Left colon (tissue), 2 donors: ENCODE measurements at regions of chr21 and their contacts with region 1.

Region 1: GRCh38 chr21:20999659-21000058 is 1.4 kb downstream of the NCAM2 start:
- DNase-seq: peak in 1 of 2 donors; percentile 32
- ATAC-seq: peak; percentile 57

Region 2: GRCh38 chr21:21188513-21189195 is 189.0 kb after region 1 on chr21:
- intact Hi-C with region 1: no loop called
- DNase-seq: no peak
- ATAC-seq: no peak

Region 3: DNA sequence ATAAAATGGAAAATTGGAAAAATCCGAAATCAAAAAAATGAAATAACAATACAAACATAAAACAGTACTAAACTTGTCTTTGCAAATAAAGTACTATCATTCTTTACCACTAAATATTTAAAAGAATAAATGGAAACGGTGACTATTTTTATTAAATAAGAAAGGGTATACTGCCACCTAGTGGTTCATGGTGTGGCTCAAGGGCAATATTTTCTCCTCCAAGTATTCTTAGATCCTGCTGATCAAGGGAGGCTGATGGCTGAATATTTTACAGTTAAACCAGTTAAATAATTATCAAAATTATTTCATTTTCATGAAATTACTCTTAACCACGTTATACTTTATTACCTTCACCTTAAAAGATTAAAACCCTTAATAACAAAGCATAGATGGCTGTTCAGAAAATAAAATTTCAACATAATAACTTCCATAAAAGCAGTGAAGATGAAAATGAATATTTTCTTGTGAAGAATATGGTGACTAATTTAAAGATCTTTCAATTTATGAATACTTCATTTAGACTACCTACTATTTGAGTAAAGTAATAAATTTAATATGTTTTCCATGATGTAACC is 1792.4 kb after region 1 on chr21:
- intact Hi-C with region 1: loop called in 1 of 2 experiments (anchors 10 kb)
- DNase-seq: peak in 1 of 2 donors; percentile 4
- ATAC-seq: no peak